IMR-90 (cell line): ENCODE measurements at regions of chr14 and their contacts with region 1.

Region 1: GRCh38 chr14:83463500-83464098 is 1929.9 kb upstream of the SEL1L start:
- DNase-seq: peak; percentile 70
- ATAC-seq: peak; percentile 70
- H3K4me3 ChIP-seq: no peak overlapping the region
- H3K27ac ChIP-seq: no peak overlapping the region
- H3K4me1 ChIP-seq: no peaks in the 10 kb centered on the region
- H3K27me3 ChIP-seq: no peaks in the 10 kb centered on the region
- CTCF ChIP-seq: peak; percentile 73
- POLR2A ChIP-seq: no peak
- RAD21 ChIP-seq: peak; percentile 76

Region 2: GRCh38 chr14:82710267-82710841 is 753.2 kb before region 1 on chr14:
- CTCF ChIA-PET with region 1: no interaction called
- POLR2A ChIA-PET with region 1: no interaction called
- dilution Hi-C with region 1: no loop called
- in situ Hi-C with region 1: no loop called
- intact Hi-C with region 1: loop called (anchors 1 kb)
- DNase-seq: peak; percentile 61
- ATAC-seq: peak; percentile 68
- H3K4me3 ChIP-seq: no peak overlapping the region
- H3K27ac ChIP-seq: no peak overlapping the region
- H3K4me1 ChIP-seq: no peaks in the 10 kb centered on the region
- H3K27me3 ChIP-seq: no peaks in the 10 kb centered on the region
- CTCF ChIP-seq: peak; percentile 66
- POLR2A ChIP-seq: no peak
- RAD21 ChIP-seq: peak; percentile 72

Region 3: DNA sequence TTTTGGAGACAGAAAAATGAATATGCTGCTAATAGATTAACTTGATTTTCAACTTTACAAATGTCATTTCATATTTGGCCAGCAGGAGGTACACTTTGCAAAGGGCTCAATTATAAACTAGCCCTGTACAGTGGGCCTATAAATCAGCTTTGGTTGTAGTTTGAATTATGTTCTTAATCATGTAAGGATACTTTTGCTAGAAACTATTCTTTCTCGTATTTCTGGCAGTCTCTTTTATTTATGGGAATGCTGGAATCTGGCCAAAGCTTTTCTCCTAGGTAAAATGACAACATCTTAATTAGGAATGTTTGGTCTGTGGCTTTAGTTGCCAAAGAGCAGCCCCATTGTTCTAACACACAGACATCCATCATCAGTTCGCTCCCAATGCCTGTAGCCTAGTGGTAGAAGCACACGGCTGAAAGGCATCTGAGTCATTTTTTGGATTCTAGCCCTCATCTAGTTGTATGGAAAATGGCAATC is 607.6 kb before region 1 on chr14:
- CTCF ChIA-PET with region 1: no interaction called
- POLR2A ChIA-PET with region 1: no interaction called
- dilution Hi-C with region 1: no loop called
- in situ Hi-C with region 1: loop called (anchors 10 kb)
- intact Hi-C with region 1: loop called (anchors 1 kb)
- DNase-seq: peak; percentile 60
- ATAC-seq: peak; percentile 67
- H3K4me3 ChIP-seq: no peak overlapping the region
- H3K27ac ChIP-seq: no peak overlapping the region
- H3K4me1 ChIP-seq: no peaks in the 10 kb centered on the region
- H3K27me3 ChIP-seq: no peaks in the 10 kb centered on the region
- CTCF ChIP-seq: peak; percentile 34; the same call in 1 of the 2 replicates
- POLR2A ChIP-seq: no peak
- RAD21 ChIP-seq: peak; percentile 46

Region 4: GRCh38 chr14:82999802-83000201 is 463.8 kb before region 1 on chr14:
- CTCF ChIA-PET with region 1: no interaction called
- POLR2A ChIA-PET with region 1: no interaction called
- dilution Hi-C with region 1: no loop called
- in situ Hi-C with region 1: no loop called
- intact Hi-C with region 1: loop called (anchors 5 kb)
- DNase-seq: peak; percentile 22
- ATAC-seq: no peak
- H3K4me3 ChIP-seq: no peak overlapping the region
- H3K27ac ChIP-seq: no peak overlapping the region
- H3K4me1 ChIP-seq: no peaks in the 10 kb centered on the region
- H3K27me3 ChIP-seq: no peaks in the 10 kb centered on the region
- CTCF ChIP-seq: peak; percentile 52
- POLR2A ChIP-seq: no peak
- RAD21 ChIP-seq: peak; percentile 48

Region 5: DNA sequence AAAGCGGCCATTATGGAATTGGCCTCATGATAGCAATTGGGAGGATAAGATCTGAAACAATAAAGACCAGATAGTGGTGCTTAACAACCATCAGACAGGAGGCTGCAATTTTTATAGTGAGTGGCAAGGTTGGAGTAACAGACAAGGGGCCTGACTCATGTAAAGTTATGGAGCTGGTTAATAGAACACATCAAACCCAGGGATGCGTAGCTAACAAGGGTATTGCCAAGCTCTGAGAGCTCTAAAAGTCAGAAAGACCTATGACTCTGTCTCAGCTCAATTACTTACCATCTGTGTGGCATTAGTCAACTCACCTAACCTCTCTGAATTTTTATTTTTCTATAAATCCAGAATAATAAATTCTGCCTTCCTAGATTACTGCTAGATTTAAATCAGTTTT is 334.8 kb after region 1 on chr14:
- CTCF ChIA-PET with region 1: no interaction called
- POLR2A ChIA-PET with region 1: no interaction called
- dilution Hi-C with region 1: no loop called
- in situ Hi-C with region 1: no loop called
- intact Hi-C with region 1: no loop called
- DNase-seq: no peak
- ATAC-seq: no peak
- H3K4me3 ChIP-seq: no peak overlapping the region
- H3K27ac ChIP-seq: no peak overlapping the region
- H3K4me1 ChIP-seq: no peaks in the 10 kb centered on the region
- H3K27me3 ChIP-seq: no peaks in the 10 kb centered on the region
- CTCF ChIP-seq: no peak
- POLR2A ChIP-seq: no peak
- RAD21 ChIP-seq: no peak